Panc1 (cell line): ENCODE measurements at regions of chr2 and their contacts with region 1.

Region 1: GRCh38 chr2:25772078-25772477 is 98.7 kb upstream of the DTNB start:
- DNase-seq: no peak
- ATAC-seq: no peak
- H3K4me3 ChIP-seq: no peak overlapping the region
- H3K27ac ChIP-seq: no peak overlapping the region
- H3K4me1 ChIP-seq: no peaks in the 10 kb centered on the region
- H3K27me3 ChIP-seq: no peaks in the 10 kb centered on the region
- CTCF ChIP-seq: no peak

Region 2: DNA sequence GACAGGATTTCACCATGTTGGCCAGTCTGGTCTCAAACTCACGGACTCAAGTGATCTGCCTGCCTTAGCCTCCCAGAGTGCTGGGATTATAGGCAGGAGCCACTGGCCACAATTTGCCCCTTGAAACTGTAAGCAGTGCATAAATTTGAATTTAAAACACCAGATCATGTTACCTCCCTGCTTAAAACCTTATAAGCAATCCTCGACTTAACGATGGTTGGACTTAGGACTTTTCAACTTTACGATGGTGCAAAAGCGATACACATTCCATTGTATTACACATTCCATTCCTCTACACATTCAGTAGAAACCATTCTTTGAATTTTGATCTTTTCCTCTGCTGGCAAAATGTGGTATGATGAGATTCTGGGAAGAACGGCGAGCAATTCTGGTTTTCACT is 753.4 kb before region 1 on chr2:
- CTCF ChIA-PET with region 1: no interaction called
- POLR2A ChIA-PET with region 1: no interaction called
- in situ Hi-C with region 1: no loop called
- intact Hi-C with region 1: no loop called
- DNase-seq: no peak
- ATAC-seq: no peak
- H3K4me3 ChIP-seq: no peak overlapping the region
- H3K27ac ChIP-seq: no peak overlapping the region
- H3K4me1 ChIP-seq: no peaks in the 10 kb centered on the region
- H3K27me3 ChIP-seq: peaks cover 1% of the 10 kb centered on the region; the same call in 1 of the 2 replicates
- CTCF ChIP-seq: no peak

Region 3: DNA sequence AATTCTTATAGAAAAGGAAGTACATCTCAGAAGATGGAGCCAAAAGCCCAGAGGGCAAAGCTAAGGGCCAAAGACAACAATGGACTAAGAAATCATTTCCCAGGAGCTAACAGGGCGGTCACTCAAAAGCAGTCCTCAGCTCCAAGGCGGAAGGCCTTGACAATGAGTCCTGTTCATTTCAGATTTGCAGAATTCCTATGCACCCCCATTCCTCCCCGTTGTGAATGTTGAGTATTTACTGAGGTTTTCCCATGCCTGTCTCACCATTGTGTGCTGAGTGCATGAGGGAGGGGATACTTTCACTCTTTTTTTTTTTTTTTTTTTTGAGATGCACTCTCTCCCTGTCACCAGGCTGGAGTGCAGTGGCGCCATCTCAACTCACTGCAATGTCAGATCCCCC is 79.9 kb before region 1 on chr2:
- CTCF ChIA-PET with region 1: no interaction called
- POLR2A ChIA-PET with region 1: interaction called, 24 read pairs
- in situ Hi-C with region 1: no loop called
- intact Hi-C with region 1: no loop called
- DNase-seq: no peak
- ATAC-seq: peak; percentile 63; the same call in 1 of the 2 replicates
- H3K4me3 ChIP-seq: no peak overlapping the region
- H3K27ac ChIP-seq: no peak overlapping the region
- H3K4me1 ChIP-seq: no peaks in the 10 kb centered on the region
- H3K27me3 ChIP-seq: no peaks in the 10 kb centered on the region
- CTCF ChIP-seq: no peak

Region 4: DNA sequence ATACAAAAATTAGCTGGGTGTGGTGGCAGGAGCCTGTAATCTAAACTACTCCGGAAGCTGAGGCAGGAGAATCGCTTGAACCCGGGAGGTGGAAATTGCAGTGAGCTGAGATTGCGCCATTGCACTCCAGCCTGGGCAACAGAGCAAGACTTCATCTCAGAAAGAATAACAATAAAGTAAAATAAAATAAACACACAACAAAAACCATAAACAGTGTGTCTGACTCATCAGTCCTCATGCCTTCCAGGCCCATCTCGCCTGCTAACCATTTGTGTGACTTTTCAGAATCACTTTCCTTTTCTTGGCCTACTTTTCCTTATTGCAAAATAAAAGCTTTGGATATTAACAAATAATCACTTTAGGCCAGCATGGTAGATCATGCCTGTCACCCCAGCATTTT is 148.2 kb after region 1 on chr2:
- CTCF ChIA-PET with region 1: no interaction called
- POLR2A ChIA-PET with region 1: no interaction called
- in situ Hi-C with region 1: no loop called
- intact Hi-C with region 1: no loop called
- DNase-seq: no peak
- ATAC-seq: peak; percentile 84
- H3K4me3 ChIP-seq: no peak overlapping the region
- H3K27ac ChIP-seq: no peak overlapping the region
- H3K4me1 ChIP-seq: no peaks in the 10 kb centered on the region
- H3K27me3 ChIP-seq: no peaks in the 10 kb centered on the region
- CTCF ChIP-seq: no peak

Region 5: GRCh38 chr2:26244309-26245121 is 472.4 kb after region 1 on chr2 and contains the starts of genes HADHA and HADHB:
- CTCF ChIA-PET with region 1: no interaction called
- POLR2A ChIA-PET with region 1: no interaction called
- in situ Hi-C with region 1: no loop called
- intact Hi-C with region 1: no loop called
- DNase-seq: peak; percentile 82
- ATAC-seq: peak; percentile 95
- H3K4me3 ChIP-seq: peak within 1 kb of the TSS; percentile 79 to 85
- H3K27ac ChIP-seq: peak within 1 kb of the TSS; percentile 81
- H3K4me1 ChIP-seq: peaks cover 30% of the 10 kb centered on the region
- H3K27me3 ChIP-seq: no peaks in the 10 kb centered on the region
- CTCF ChIP-seq: peak; percentile 37; the same call in 1 of the 2 replicates
- total RNA-seq, gene HADHA: 148 TPM
- total RNA-seq, gene HADHB: 106 TPM